ENCODE measurements at regions of chr10 and their contacts with region 1.

Region 1: DNA sequence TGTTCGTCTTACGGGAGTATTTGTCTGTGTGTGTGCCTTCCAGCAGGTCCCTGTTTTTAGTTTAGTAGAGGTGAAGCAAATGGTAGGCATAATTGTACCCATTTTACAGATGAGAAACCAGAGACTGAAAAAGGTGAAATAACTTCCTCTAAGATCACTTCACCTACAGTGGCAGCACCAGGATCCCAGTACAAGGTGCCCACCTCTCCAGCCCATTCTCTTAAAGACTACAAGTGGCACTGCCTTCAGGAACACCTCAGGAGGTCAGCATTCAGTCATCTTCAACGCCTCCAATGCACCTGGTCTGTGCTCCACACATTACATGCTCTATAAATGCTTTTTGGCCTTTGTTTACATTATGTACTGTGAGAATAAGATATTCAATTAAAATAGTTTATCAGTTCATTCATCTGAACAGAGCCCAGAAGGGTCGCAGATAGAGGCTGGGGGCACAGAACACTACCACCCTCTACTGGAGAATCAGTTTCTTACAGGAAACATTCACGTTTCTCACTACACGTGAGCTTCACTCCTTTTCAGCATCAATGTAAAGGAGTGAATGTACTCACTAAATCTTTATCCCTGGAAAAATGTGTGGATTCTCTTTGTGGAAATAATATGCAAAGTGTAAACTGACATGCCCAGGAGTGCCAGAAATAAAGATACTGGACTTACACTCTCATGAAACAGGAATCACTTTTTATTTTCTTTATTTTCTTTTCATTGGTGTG is 45.5 kb upstream of the ABLIM1 start:
- DNase-seq: no peak
- ATAC-seq: peak; percentile 66
- H3K4me3 ChIP-seq: no peak overlapping the region
- H3K27ac ChIP-seq: peak overlapping the region; percentile 100
- H3K4me1 ChIP-seq: peaks cover 68% of the 10 kb centered on the region
- H3K27me3 ChIP-seq: no peaks in the 10 kb centered on the region
- CTCF ChIP-seq: peak; percentile 91

Region 2: GRCh38 chr10:114427124-114427852 is 276.3 kb before region 1 on chr10:
- CTCF ChIA-PET with region 1: no interaction called
- POLR2A ChIA-PET with region 1: interaction called, 13 read pairs
- in situ Hi-C with region 1: no loop called
- intact Hi-C with region 1: no loop called
- DNase-seq: no peak
- ATAC-seq: peak; percentile 76
- H3K4me3 ChIP-seq: no peak overlapping the region
- H3K27ac ChIP-seq: peak overlapping the region; percentile 80
- H3K4me1 ChIP-seq: peaks cover 36% of the 10 kb centered on the region
- H3K27me3 ChIP-seq: no peaks in the 10 kb centered on the region
- CTCF ChIP-seq: peak; percentile 41

Region 3: DNA sequence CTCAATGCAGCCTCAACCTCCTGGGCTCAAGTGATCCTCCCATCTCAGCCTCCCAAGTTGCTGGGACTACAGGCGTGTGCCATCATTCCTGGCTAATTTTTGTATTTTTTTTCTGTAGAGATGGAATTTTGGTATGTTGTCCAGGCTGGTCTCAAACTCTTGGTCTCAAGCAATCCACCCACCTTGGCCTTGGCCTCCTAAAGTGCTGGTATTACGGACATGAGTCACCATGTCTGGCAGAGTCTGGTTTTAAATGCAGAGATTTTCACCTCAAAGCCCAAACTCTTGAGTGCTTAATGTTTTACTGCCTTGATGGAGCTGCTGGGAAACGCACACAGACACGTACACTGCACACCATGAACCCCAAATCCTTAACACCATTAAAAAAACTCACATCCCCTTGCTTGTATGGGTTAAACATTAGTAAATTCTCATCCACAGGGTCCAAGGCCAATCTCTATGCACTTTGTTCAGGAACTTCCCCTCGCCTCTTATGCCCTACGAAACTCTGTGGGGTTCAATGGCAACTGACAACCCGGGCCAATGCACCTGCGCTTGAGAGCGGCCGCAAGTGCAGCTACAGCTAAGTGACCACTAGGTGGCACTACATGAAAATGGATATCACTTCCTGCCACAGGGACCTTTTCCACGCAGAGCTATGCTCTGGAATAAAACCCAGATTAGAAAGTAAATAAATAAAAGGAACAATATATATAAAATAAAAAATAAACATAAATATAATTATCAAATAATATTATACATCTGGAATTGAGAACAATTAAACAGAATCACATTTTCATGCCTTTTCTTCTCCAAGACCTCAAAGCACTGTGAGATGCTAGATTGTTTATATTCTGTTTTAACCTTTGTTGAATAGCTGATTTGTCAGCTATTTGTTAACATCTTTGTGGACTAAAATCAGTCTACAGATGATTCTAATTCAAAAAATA is 232.3 kb before region 1 on chr10:
- CTCF ChIA-PET with region 1: interaction called, 8 read pairs
- POLR2A ChIA-PET with region 1: no interaction called
- in situ Hi-C with region 1: no loop called
- intact Hi-C with region 1: loop called (anchors 5 kb)
- DNase-seq: peak; percentile 59
- ATAC-seq: peak; percentile 89
- H3K4me3 ChIP-seq: no peak overlapping the region
- H3K27ac ChIP-seq: peak overlapping the region; percentile 36; the same call in 1 of the 2 replicates
- H3K4me1 ChIP-seq: peaks cover 21% of the 10 kb centered on the region
- H3K27me3 ChIP-seq: no peaks in the 10 kb centered on the region
- CTCF ChIP-seq: peak; percentile 91

Region 4: GRCh38 chr10:114550756-114551635 is 152.5 kb before region 1 on chr10:
- CTCF ChIA-PET with region 1: interaction called, 5 read pairs
- POLR2A ChIA-PET with region 1: no interaction called
- in situ Hi-C with region 1: no loop called
- intact Hi-C with region 1: loop called (anchors 5 kb)
- DNase-seq: no peak
- ATAC-seq: peak; percentile 47
- H3K4me3 ChIP-seq: no peak overlapping the region
- H3K27ac ChIP-seq: peak overlapping the region; percentile 81
- H3K4me1 ChIP-seq: peaks cover 34% of the 10 kb centered on the region
- H3K27me3 ChIP-seq: no peaks in the 10 kb centered on the region
- CTCF ChIP-seq: peak; percentile 62

Measured in Panc1 (cell line).